Heart left ventricle (tissue), 16 donors: ENCODE measurements at regions of chrX and their contacts with region 1.

Region 1: GRCh38 chrX:55011294-55011693 is 11.1 kb downstream of the APEX2 start:
- DNase-seq: no peak
- ATAC-seq: no peak
- H3K4me3 ChIP-seq: no peak overlapping the region
- H3K27ac ChIP-seq: no peak overlapping the region
- H3K4me1 ChIP-seq: peaks cover 0 to 32% (median 8%) of the 10 kb centered on the region in 12 donors
- H3K27me3 ChIP-seq: peaks cover 0 to 12% (median 0%) of the 10 kb centered on the region in 9 donors
- CTCF ChIP-seq: peak in 2 of 12 donors; percentile 10 to 11
- POLR2A ChIP-seq: no peak

Region 2: DNA sequence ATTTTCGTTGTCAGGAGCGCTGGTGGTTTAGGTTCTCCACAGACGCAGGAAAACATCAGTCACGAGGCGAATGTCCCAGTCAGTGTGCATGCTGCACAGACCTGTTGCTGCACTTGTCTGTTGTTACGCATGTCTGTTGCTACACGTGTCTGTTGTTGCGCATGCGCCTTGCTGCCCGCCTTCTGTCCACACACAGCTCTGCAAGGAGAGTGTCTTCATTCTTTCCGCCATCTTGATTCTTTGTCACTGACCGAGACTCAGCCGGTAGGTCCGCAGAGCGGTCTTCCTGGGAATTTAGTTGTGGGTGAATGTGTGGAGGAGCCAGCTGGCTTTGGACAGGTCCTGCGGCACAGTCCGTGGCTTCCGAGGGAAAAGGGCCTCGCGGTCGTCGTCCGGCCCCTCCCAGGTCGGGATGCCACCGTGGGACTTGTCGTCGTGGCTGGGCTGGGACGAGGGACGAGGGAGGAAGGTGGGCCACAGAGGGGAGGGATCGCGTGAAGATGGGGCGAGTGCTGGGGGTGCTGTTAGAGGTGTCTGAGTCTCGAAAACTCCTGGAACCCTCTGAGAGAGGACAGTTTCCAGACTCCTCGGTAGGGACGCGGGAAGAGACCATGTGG is 63.7 kb after region 1 on chrX and contains the start of gene PAGE2B:
- intact Hi-C with region 1: loop called in 1 of 10 experiments (anchors 10 kb)
- DNase-seq: no peak
- ATAC-seq: no peak
- H3K4me3 ChIP-seq: no peak within 1 kb of the TSS
- H3K27ac ChIP-seq: no peak within 1 kb of the TSS
- H3K4me1 ChIP-seq: no peaks in the 10 kb centered on the region
- H3K27me3 ChIP-seq: peaks cover 0 to 7% (median 0%) of the 10 kb centered on the region in 9 donors
- CTCF ChIP-seq: no peak
- POLR2A ChIP-seq: no peak
- total RNA-seq, gene PAGE2B: not detected